ENCODE measurements at regions of chr12 and their contacts with region 1.

Region 1: GRCh38 chr12:69070319-69071090 is 137.5 kb upstream of the CPM start:
- DNase-seq: peak; percentile 87
- H3K4me3 Mint-ChIP-seq: no peak overlapping the region
- H3K27ac Mint-ChIP-seq: no peak overlapping the region
- H3K4me1 Mint-ChIP-seq: peaks cover 38% of the 10 kb centered on the region
- H3K27me3 Mint-ChIP-seq: peaks cover 8% of the 10 kb centered on the region

Region 2: DNA sequence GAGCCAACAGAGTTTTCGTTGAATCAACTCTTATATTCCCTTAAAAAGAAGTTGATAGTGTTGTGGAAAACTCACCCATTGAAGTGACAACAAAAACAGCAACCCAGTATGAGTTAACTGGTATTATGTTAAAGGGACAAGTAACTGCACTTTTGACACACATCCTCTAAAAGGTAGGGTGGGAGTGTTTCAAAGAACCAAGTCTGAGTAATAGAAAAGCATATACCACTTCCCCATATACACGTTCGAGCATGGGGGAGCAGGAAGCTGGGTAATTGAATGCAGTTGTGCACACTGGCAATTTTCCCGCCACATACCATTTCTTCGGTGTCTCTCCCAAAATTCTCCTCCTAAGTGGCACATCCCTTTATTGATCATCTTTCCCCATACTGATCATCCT is 1049.8 kb before region 1 on chr12:
- CTCF ChIA-PET with region 1: no interaction called
- intact Hi-C with region 1: no loop called
- DNase-seq: no peak
- H3K4me3 Mint-ChIP-seq: no peak overlapping the region
- H3K27ac Mint-ChIP-seq: no peak overlapping the region
- H3K4me1 Mint-ChIP-seq: no peaks in the 10 kb centered on the region
- H3K27me3 Mint-ChIP-seq: peaks cover 2% of the 10 kb centered on the region

Region 3: GRCh38 chr12:68331869-68332727 is 738.4 kb before region 1 on chr12 and contains the start of gene MDM1:
- CTCF ChIA-PET with region 1: no interaction called
- intact Hi-C with region 1: loop called (anchors 2 kb)
- DNase-seq: peak; percentile 96
- H3K4me3 Mint-ChIP-seq: peak within 1 kb of the TSS; percentile 84
- H3K27ac Mint-ChIP-seq: peak within 1 kb of the TSS; percentile 73
- H3K4me1 Mint-ChIP-seq: peaks cover 47% of the 10 kb centered on the region
- H3K27me3 Mint-ChIP-seq: no peaks in the 10 kb centered on the region
- total RNA-seq, gene MDM1: 16.5 to 20.8 TPM

Region 4: GRCh38 chr12:68825569-68826217 is 244.8 kb before region 1 on chr12:
- CTCF ChIA-PET with region 1: interaction called, 5 read pairs
- intact Hi-C with region 1: loop called (anchors 1 kb)
- DNase-seq: no peak
- H3K4me3 Mint-ChIP-seq: no peak overlapping the region
- H3K27ac Mint-ChIP-seq: peak overlapping the region; percentile 20
- H3K4me1 Mint-ChIP-seq: peaks cover 43% of the 10 kb centered on the region
- H3K27me3 Mint-ChIP-seq: no peaks in the 10 kb centered on the region

Region 5: DNA sequence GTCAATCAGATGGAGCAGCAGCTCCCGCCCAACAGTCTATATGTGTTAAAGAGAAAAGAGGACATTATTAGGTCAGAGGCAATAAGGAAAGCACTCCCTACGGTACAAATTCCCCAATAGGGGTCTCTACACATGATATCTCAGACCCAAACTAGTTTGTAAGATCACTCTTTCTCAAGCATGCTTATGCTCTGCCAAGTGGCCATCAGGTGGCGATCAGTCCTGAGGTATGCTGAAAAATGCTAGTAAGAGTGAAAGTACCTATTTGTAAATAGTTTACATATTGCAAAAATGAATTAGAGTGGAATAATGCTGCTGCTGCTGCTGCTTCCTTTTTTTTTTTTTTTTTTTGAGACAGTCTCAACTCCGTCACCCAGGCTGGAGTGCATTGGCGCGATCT is 198.6 kb before region 1 on chr12:
- CTCF ChIA-PET with region 1: interaction called, 6 read pairs
- intact Hi-C with region 1: loop called (anchors 1 kb)
- DNase-seq: peak; percentile 54
- H3K4me3 Mint-ChIP-seq: no peak overlapping the region
- H3K27ac Mint-ChIP-seq: no peak overlapping the region
- H3K4me1 Mint-ChIP-seq: no peaks in the 10 kb centered on the region
- H3K27me3 Mint-ChIP-seq: no peaks in the 10 kb centered on the region

Region 6: GRCh38 chr12:68977909-68978610 is 92.4 kb before region 1 on chr12:
- CTCF ChIA-PET with region 1: interaction called, 5 read pairs
- intact Hi-C with region 1: loop called (anchors 1 kb)
- DNase-seq: no peak
- H3K4me3 Mint-ChIP-seq: no peak overlapping the region
- H3K27ac Mint-ChIP-seq: no peak overlapping the region
- H3K4me1 Mint-ChIP-seq: peaks cover 4% of the 10 kb centered on the region
- H3K27me3 Mint-ChIP-seq: peaks cover 6% of the 10 kb centered on the region

Region 7: GRCh38 chr12:69059483-69060457 is 10.7 kb before region 1 on chr12:
- CTCF ChIA-PET with region 1: interaction called, 15 read pairs
- intact Hi-C with region 1: loop called (anchors 1 kb)
- DNase-seq: peak; percentile 37
- H3K4me3 Mint-ChIP-seq: no peak overlapping the region
- H3K27ac Mint-ChIP-seq: peak overlapping the region; percentile 81
- H3K4me1 Mint-ChIP-seq: peaks cover 49% of the 10 kb centered on the region
- H3K27me3 Mint-ChIP-seq: no peaks in the 10 kb centered on the region

Region 8: DNA sequence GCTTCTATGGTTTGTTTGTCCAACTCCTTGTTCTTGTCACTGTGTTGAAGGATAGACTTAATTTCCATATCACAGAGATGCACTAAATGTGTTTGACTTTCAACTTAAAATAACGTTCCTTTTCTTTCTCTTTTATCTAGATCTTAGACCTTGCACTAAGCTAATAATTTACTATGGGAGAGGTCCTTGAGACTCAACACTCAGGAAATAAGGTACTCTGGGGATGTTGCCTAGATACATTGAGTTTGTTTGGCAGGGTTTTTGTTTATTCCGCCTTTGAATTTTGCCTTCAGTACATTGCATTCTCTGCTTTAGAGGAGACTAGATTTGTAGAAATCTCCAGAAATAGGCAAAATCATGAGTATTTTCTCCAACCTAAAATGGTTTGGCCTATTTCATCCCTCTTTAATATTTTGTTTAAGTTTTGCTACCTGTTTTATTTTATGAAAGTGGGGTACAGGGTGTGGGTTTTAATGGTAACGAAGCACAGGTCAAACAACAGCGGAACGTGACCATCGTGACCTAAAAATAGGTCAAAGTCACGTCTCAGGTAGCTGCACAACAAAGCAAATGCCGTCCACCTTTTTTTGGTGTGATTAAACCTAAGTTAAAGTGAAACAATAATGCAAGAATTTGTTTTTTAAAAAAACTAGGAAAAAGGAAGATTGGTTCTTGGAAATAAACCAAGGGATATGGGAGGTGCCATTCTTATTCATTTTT is 53.6 kb after region 1 on chr12:
- CTCF ChIA-PET with region 1: no interaction called
- intact Hi-C with region 1: no loop called
- DNase-seq: no peak
- H3K4me3 Mint-ChIP-seq: no peak overlapping the region
- H3K27ac Mint-ChIP-seq: no peak overlapping the region
- H3K4me1 Mint-ChIP-seq: no peaks in the 10 kb centered on the region
- H3K27me3 Mint-ChIP-seq: no peaks in the 10 kb centered on the region